Activated T-helper 1 cell treated with anti-CD3 and anti-CD28 coated beads, Interleukin-12 subunit alpha, Interleukin-12 subunit beta, Interleukin-2, Interleukin-4 antibody, amounts not matched to agents 30 ng/mL and 10 ng/mL and 1 ng/mL, durations not matched to agents 14 hours and 24 hours and 36 hours (primary cell): ENCODE measurements at regions of chr17 and their contacts with region 1.

Region 1: GRCh38 chr17:77404812-77405581 is 264.2 kb downstream of the SEC14L1 start:
- DNase-seq: peak; percentile 83
- H3K4me3 Mint-ChIP-seq: peak overlapping the region; percentile 92
- H3K27ac Mint-ChIP-seq: peak overlapping the region; percentile 92
- H3K4me1 Mint-ChIP-seq: peaks cover 88% of the 10 kb centered on the region
- H3K27me3 Mint-ChIP-seq: no peaks in the 10 kb centered on the region

Region 2: DNA sequence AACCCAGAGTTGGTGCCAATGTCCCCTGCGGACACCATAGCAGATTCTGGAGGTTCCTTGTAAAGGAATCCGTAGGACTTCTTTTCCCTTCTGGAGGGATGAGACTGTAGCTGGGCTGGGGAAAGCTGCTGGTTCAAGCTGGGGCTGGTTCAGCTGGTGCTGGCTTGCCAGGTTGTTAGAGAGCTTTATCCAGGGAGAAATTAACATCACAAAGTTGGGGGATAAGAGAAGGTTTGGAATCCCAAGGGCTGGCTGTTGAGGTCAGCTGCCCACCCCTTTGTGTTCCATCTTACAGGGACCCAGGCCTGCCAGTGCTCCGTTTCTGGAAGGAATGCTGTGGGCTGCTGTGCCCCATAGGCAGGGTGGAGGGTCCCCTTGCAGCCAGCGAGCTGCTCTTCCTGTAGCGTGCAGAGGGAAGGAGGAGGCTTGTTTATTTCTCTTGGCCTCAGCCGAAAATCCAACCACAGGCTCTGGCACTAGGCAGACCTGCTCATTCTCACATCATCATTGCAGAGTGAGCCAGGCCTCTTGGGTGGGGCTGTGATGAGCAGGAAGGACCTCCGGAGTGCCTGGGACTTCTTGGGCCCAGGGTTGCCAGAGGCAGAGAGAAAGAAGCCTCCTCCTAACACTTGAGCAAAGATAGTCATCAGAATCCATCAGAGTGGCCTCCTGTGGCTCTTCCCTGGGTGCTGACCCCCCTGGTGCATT is 13.2 kb before region 1 on chr17:
- intact Hi-C with region 1: loop called (anchors 1 kb)
- DNase-seq: peak; percentile 61
- H3K4me3 Mint-ChIP-seq: peak overlapping the region; percentile 87
- H3K27ac Mint-ChIP-seq: peak overlapping the region; percentile 87
- H3K4me1 Mint-ChIP-seq: peaks cover 80% of the 10 kb centered on the region
- H3K27me3 Mint-ChIP-seq: no peaks in the 10 kb centered on the region

Region 3: DNA sequence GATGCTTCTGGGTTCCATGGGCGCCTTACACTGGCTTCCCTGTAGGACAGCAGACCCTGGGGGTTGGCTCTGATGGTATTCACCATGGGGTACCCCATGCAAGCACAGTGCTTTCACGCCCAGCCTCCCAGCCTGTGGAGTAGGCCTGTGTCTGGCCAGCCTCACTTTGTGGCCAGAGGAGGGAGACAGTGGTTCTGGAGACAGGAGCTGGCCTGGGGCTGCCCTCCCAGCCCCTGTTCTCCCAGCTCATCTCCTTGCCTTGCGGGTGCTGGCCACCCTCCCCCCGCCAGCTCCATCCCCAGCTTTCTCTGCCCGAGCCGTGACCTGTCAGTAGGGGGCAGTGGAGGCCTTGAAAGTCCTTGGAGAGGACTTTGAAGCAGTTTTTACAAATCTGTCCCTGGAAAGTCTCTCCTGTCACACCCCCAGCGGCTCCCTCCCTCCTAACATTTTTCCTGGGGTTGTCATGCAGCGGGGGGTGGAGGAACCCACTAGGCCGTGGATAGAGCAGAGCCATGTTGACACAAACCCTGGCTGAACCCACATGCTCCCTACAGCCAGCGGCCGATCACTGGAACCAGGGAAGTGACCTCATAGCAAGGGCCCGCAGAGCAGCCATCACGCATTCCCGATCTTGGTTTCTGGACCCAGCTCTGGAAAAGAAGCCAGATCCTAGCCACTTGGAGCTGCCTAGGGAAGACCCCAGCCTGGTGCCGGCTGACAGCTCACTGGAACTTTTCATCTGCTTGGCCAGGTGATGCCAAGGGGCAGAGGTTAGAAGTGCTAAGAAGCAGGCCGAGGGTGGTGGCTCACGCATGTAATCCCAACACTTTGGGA is 25.1 kb after region 1 on chr17:
- intact Hi-C with region 1: loop called (anchors 1 kb)
- DNase-seq: peak; percentile 66
- H3K4me3 Mint-ChIP-seq: no peak overlapping the region
- H3K27ac Mint-ChIP-seq: peak overlapping the region; percentile 59
- H3K4me1 Mint-ChIP-seq: peaks cover 68% of the 10 kb centered on the region
- H3K27me3 Mint-ChIP-seq: no peaks in the 10 kb centered on the region

Region 4: DNA sequence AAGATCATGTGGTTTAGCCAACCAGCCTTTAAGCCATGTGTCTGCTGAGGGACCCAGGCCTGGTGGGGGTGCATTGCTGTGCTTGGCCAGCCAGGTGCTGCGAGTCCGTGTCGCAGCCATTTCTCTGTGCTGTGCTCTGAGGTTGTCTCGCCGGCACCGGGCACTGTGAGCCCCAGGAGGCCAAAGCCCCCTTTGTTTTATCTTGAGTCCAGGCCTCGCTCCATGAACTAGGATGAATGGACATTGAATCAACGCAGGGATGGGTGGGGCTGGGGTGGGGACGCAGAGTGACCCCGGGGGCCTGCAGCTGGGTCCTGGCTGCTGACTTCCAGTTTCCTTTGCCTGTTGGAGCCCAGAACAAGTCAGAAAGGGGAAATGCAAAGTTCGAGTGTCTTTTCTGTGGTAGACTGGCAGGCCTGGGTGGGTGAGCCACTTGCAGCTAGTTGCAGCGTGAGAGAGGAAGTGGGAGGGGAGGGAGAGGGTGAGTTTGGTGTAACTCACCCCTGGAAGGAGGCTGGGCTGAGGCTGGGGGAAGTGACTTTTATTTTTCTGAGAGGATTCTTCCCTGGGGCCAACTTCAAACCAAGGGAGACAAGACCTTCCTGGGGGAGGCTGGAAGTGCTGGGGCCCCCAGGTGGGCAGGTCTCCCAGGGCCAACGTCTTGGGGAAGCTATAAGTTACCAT is 60.5 kb after region 1 on chr17:
- intact Hi-C with region 1: loop called (anchors 2 kb)
- DNase-seq: peak; percentile 72
- H3K4me3 Mint-ChIP-seq: peak overlapping the region; percentile 59
- H3K27ac Mint-ChIP-seq: peak overlapping the region; percentile 89
- H3K4me1 Mint-ChIP-seq: peaks cover 77% of the 10 kb centered on the region
- H3K27me3 Mint-ChIP-seq: no peaks in the 10 kb centered on the region

Region 5: GRCh38 chr17:77494664-77495435 is 89.9 kb after region 1 on chr17:
- intact Hi-C with region 1: loop called (anchors 1 kb)
- DNase-seq: peak; percentile 61
- H3K4me3 Mint-ChIP-seq: no peak overlapping the region
- H3K27ac Mint-ChIP-seq: peak overlapping the region; percentile 8
- H3K4me1 Mint-ChIP-seq: peaks cover 18% of the 10 kb centered on the region
- H3K27me3 Mint-ChIP-seq: no peaks in the 10 kb centered on the region